Prostate gland (tissue), 2 donors: ENCODE measurements at regions of chr5 and their contacts with region 1.

Region 1: GRCh38 chr5:1641560-1642166 is 117.9 kb upstream of the LPCAT1 start:
- DNase-seq: peak; percentile 82
- H3K4me3 ChIP-seq: no peak overlapping the region
- H3K27ac ChIP-seq: no peak overlapping the region
- H3K4me1 ChIP-seq: peaks cover 4% of the 10 kb centered on the region
- H3K27me3 ChIP-seq: peaks cover 6% of the 10 kb centered on the region
- CTCF ChIP-seq: peak; percentile 40 to 92 (median 70)
- POLR2A ChIP-seq: no peak

Region 2: DNA sequence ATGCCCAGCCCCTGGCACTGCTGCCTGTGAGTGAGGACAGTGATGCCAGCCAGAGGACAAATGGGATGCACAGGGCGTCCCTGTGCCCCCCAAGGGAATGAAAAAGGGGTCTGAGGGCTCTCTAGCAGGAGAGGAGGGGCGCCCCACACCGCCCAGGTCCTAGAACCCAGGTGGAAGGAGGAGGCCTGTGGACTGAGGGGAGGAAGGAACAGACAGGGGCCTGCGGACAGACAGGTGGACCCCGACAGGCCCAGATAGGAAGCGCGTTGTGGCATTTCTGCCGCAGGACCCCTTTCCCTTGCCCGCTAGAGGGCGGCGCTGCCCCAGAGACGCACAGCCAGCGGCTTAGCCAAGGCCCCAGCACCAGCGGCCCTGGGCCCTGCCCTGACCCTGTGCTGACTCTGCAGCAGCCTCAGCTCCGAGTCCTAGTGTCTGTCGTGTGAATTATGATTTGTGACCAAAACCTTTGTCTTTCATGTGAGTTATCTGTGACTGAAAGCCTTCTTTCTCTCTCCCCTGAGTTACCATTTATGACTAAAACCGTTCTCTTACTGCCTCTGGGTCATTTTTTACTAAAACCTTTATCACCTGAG is 718.3 kb before region 1 on chr5:
- intact Hi-C with region 1: loop called (anchors 5 kb)
- DNase-seq: peak; percentile 64
- H3K4me3 ChIP-seq: no peak overlapping the region
- H3K27ac ChIP-seq: no peak overlapping the region
- H3K4me1 ChIP-seq: no peaks in the 10 kb centered on the region
- H3K27me3 ChIP-seq: no peaks in the 10 kb centered on the region
- CTCF ChIP-seq: peak; percentile 66 to 87 (median 74)
- POLR2A ChIP-seq: no peak

Region 3: GRCh38 chr5:1167728-1168709 is 473.6 kb before region 1 on chr5:
- intact Hi-C with region 1: loop called (anchors 5 kb)
- DNase-seq: peak; percentile 72
- H3K4me3 ChIP-seq: no peak overlapping the region
- H3K27ac ChIP-seq: no peak overlapping the region
- H3K4me1 ChIP-seq: no peaks in the 10 kb centered on the region
- H3K27me3 ChIP-seq: no peaks in the 10 kb centered on the region
- CTCF ChIP-seq: peak; percentile 37 to 81 (median 66)
- POLR2A ChIP-seq: no peak

Region 4: GRCh38 chr5:1344975-1345838 is 296.5 kb before region 1 on chr5 and contains the start of gene CLPTM1L:
- intact Hi-C with region 1: loop called (anchors 10 kb)
- DNase-seq: peak; percentile 81
- H3K4me3 ChIP-seq: peak within 1 kb of the TSS; percentile 89 to 93
- H3K27ac ChIP-seq: peak within 1 kb of the TSS; percentile 78 to 82
- H3K4me1 ChIP-seq: peaks cover 5% of the 10 kb centered on the region
- H3K27me3 ChIP-seq: no peaks in the 10 kb centered on the region
- CTCF ChIP-seq: peak in 2 of 4 experiments; percentile 44 to 55
- POLR2A ChIP-seq: peak; percentile 56
- total RNA-seq, gene CLPTM1L: 105 to 135 TPM

Region 5: GRCh38 chr5:1385395-1386273 is 256.0 kb before region 1 on chr5:
- intact Hi-C with region 1: loop called (anchors 10 kb)
- DNase-seq: peak; percentile 87
- H3K4me3 ChIP-seq: peak overlapping the region; percentile 51 to 53
- H3K27ac ChIP-seq: peak overlapping the region; percentile 82 to 85
- H3K4me1 ChIP-seq: peaks cover 5% of the 10 kb centered on the region
- H3K27me3 ChIP-seq: no peaks in the 10 kb centered on the region
- CTCF ChIP-seq: no peak
- POLR2A ChIP-seq: peak; percentile 70

Region 6: GRCh38 chr5:1479581-1480188 is 162.0 kb before region 1 on chr5:
- intact Hi-C with region 1: loop called (anchors 10 kb)
- DNase-seq: no peak
- H3K4me3 ChIP-seq: no peak overlapping the region
- H3K27ac ChIP-seq: no peak overlapping the region
- H3K4me1 ChIP-seq: no peaks in the 10 kb centered on the region
- H3K27me3 ChIP-seq: no peaks in the 10 kb centered on the region
- CTCF ChIP-seq: peak; percentile 10 to 54 (median 45)
- POLR2A ChIP-seq: no peak

Region 7: DNA sequence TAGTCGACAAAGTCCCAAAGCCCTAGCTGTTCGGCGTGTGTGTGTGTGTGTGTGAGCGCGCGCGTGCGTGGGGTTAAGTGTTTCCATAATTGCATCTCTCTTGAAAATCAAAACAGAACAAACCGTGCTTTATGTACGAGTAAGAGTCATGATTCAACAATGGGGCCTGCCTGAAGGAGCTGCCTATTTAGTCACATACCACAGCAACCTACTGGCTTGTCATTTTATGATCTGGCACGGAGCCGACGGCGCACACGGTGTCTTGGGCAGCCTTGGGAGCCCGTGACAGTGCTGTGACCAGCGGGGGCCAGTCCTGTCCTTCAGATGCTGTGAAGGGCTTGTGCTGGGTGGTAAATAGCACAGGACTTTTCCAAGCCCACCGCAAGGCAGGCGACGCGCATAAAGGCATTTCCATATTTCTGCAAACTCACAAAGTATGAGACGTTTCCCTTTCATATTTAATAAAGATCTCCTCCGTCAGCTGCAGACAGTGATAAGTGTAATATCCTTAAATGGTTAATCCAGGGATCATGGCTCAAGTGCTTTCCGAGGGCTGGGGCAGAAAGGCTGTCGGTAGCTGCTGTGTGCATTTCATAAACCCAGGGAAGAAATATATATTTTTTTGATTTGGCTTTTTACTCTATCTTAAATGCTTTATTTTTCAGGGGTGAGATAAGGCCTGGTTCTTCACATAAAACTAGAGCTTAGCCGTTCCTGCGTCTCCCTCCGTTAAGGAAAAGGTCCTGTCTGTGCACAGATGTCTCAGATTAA is 1683.7 kb after region 1 on chr5:
- intact Hi-C with region 1: no loop called
- DNase-seq: peak; percentile 84
- H3K4me3 ChIP-seq: no peak overlapping the region
- H3K27ac ChIP-seq: peak overlapping the region; percentile 46 to 48
- H3K4me1 ChIP-seq: peaks cover 6% of the 10 kb centered on the region
- H3K27me3 ChIP-seq: no peaks in the 10 kb centered on the region
- CTCF ChIP-seq: no peak
- POLR2A ChIP-seq: no peak